A673 (cell line): ENCODE measurements at regions of chr7 and their contacts with region 1.

Region 1: GRCh38 chr7:42143711-42144600 is 93.1 kb downstream of the GLI3 start:
- DNase-seq: peak; percentile 64
- H3K4me3 ChIP-seq: peak overlapping the region; percentile 24
- H3K27ac ChIP-seq: peak overlapping the region; percentile 70
- H3K4me1 ChIP-seq: peaks cover 31% of the 10 kb centered on the region
- H3K27me3 ChIP-seq: no peaks in the 10 kb centered on the region
- CTCF ChIP-seq: no peak

Region 2: DNA sequence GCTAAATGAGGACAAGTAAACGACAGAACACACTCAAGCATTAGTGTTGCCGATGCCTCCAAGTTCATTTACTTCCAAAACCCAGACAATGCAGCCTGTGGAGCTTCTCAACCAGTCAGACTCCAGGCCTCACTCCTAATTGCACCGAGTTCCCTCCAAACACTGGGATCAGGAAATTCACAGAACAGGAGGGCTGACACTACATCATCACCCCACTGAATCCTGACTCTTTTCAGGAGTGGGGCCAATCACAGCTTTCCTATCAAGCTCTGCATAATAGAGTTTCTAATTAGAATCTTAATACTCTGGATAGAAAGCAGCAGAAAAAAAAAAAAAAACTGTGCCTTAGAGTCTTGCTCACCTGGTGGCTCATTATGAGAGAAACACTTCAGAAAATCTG is 10.6 kb before region 1 on chr7:
- CTCF ChIA-PET with region 1: no interaction called
- POLR2A ChIA-PET with region 1: interaction called, 10 read pairs
- intact Hi-C with region 1: no loop called
- DNase-seq: no peak
- H3K4me3 ChIP-seq: no peak overlapping the region
- H3K27ac ChIP-seq: no peak overlapping the region
- H3K4me1 ChIP-seq: peaks cover 30% of the 10 kb centered on the region
- H3K27me3 ChIP-seq: no peaks in the 10 kb centered on the region
- CTCF ChIP-seq: no peak

Region 3: GRCh38 chr7:42232275-42232674 is 88.3 kb after region 1 on chr7:
- CTCF ChIA-PET with region 1: interaction called, 3 read pairs
- POLR2A ChIA-PET with region 1: no interaction called
- intact Hi-C with region 1: loop called (anchors 5 kb)
- DNase-seq: peak; percentile 76
- H3K4me3 ChIP-seq: peak overlapping the region; percentile 89
- H3K27ac ChIP-seq: peak overlapping the region; percentile 63
- H3K4me1 ChIP-seq: peaks cover 79% of the 10 kb centered on the region
- H3K27me3 ChIP-seq: no peaks in the 10 kb centered on the region
- CTCF ChIP-seq: no peak